Psoas muscle (tissue), 8 donors: ENCODE measurements at regions of chr20 and their contacts with region 1.

Region 1: GRCh38 chr20:18456600-18456999 is 10.2 kb downstream of the DZANK1 start:
- DNase-seq: no peak
- ATAC-seq: no peak
- H3K4me3 ChIP-seq: no peak overlapping the region
- H3K27ac ChIP-seq: no peak overlapping the region
- H3K4me1 ChIP-seq: no peaks in the 10 kb centered on the region
- H3K27me3 ChIP-seq: no peaks in the 10 kb centered on the region
- CTCF ChIP-seq: no peak

Region 2: GRCh38 chr20:17968366-17969279 is 488.0 kb before region 1 on chr20 and contains the starts of genes MGME1 and SNX5:
- intact Hi-C with region 1: no loop called
- DNase-seq: peak; percentile 99 to 100
- ATAC-seq: peak; percentile 92 to 96 (median 92)
- H3K4me3 ChIP-seq: peak within 1 kb of the TSS; percentile 97
- H3K27ac ChIP-seq: peak within 1 kb of the TSS; percentile 98
- H3K4me1 ChIP-seq: peaks cover 54% of the 10 kb centered on the region
- H3K27me3 ChIP-seq: no peaks in the 10 kb centered on the region
- CTCF ChIP-seq: no peak
- total RNA-seq, gene MGME1: 8.6 to 21.8 (median 12.2) TPM
- total RNA-seq, gene SNX5: 59.8 to 81.3 (median 69.7) TPM

Region 3: GRCh38 chr20:18416486-18416885 is 40.1 kb before region 1 on chr20:
- intact Hi-C with region 1: loop called in 1 of 2 experiments (anchors 5 kb)
- DNase-seq: no peak
- ATAC-seq: no peak
- H3K4me3 ChIP-seq: no peak overlapping the region
- H3K27ac ChIP-seq: no peak overlapping the region
- H3K4me1 ChIP-seq: no peaks in the 10 kb centered on the region
- H3K27me3 ChIP-seq: no peaks in the 10 kb centered on the region
- CTCF ChIP-seq: no peak